Activated CD4-positive, alpha-beta memory T cell treated with anti-CD3 and anti-CD28 coated beads, Interleukin-2, amount 10 ng/mL, durations not matched to agents 7 days and 5 days (primary cell): ENCODE measurements at regions of chr1 and their contacts with region 1.

Region 1: DNA sequence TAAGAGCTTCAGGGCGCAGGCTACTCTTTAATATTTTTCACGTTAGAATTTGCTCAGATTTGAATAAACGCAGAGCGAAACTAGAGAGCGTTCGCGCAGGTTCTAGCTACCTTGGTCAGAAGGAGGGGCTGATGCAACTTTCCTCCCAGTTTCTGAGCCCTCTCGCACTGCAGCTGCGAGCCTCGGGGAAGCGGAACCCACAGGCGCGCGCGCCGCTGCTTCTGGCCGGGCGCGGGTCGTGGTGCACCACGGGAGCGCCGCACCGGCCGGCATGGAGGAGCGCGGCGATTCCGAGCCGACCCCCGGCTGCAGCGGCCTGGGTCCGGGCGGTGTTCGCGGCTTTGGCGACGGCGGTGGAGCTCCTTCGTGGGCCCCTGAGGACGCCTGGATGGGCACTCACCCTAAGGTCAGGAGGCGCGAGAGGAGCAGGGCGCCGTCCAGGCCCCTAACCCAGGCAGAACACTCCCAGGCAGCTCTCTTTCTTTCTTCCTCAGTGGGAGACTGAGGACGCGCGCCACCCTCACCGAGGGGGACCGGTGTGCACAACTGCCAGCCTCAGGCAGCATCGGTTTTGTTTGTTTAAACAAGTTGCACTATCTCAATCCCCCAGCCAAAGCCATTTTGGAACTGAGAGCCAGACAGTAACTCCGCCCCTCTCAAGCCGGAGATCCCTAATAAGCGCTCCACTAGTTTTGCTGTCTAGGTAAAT is at the start of gene TSEN15:
- DNase-seq: peak; percentile 85
- H3K4me3 Mint-ChIP-seq: peak within 1 kb of the TSS; percentile 96
- H3K27ac Mint-ChIP-seq: peak within 1 kb of the TSS; percentile 94
- H3K4me1 Mint-ChIP-seq: peaks cover 31% of the 10 kb centered on the region
- H3K27me3 Mint-ChIP-seq: peaks cover 30% of the 10 kb centered on the region
- total RNA-seq, gene TSEN15: 52.6 to 53.7 TPM

Region 2: DNA sequence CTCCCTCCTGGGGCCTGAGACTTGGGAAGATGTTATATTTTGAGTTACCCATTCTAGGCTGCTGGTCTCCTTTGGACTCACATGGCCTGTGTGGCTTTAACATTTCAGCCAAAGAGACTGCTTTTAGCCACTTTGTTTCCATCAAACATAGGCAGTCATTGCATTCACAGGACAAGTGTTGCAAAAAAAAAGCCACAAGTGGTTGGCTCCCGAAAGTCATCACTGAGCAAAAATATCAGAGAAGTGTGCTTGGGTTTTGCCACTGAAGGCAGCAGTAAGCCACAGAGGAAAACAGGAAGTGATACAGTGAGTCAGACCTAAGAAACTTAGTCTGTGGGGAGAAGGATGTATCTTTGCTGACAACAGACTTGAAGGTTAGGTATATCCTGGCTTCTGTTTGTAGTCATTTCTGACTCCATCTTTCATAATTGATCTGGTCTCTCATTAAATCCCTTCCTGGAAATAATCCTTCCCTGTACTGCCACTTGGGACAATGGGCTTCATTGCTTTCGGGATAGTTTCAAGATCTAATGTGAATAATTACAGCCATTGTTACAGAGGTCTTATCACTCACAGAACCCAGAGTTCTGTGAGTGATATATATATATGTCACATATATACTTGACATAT is 95.0 kb before region 1 on chr1:
- CTCF ChIA-PET with region 1: interaction called, 10 read pairs
- POLR2A ChIA-PET with region 1: interaction called, 39 read pairs
- DNase-seq: peak; percentile 74
- H3K4me3 Mint-ChIP-seq: peak overlapping the region; percentile 8
- H3K27ac Mint-ChIP-seq: no peak overlapping the region
- H3K4me1 Mint-ChIP-seq: peaks cover 9% of the 10 kb centered on the region
- H3K27me3 Mint-ChIP-seq: no peaks in the 10 kb centered on the region

Region 3: DNA sequence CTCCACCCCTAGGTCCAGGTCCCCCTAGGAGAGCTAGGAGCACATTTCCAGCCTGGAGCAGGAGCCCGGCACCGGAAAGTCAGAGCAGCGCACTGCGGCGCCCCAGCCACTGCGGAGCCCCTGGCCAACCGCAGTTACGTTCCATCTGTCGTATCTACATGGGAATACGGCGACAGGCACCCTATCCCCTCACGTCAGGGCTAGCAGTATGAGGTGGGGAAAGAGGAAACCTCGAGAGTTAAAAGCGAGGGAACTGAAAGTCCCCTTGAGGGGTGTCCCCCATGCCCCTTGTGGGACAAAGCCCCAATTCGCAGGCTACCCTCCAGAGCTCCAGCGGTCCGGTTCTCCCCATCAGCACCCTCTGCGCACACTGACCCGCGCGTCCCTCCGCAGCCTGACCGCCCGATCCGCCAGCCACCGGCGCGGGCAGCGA is 15.1 kb before region 1 on chr1:
- CTCF ChIA-PET with region 1: interaction called, 3 read pairs
- POLR2A ChIA-PET with region 1: interaction called, 17 read pairs
- DNase-seq: peak; percentile 20
- H3K4me3 Mint-ChIP-seq: peak overlapping the region; percentile 58
- H3K27ac Mint-ChIP-seq: no peak overlapping the region
- H3K4me1 Mint-ChIP-seq: peaks cover 28% of the 10 kb centered on the region
- H3K27me3 Mint-ChIP-seq: peaks cover 68% of the 10 kb centered on the region

Region 4: GRCh38 chr1:184110272-184111204 is 58.9 kb after region 1 on chr1:
- CTCF ChIA-PET with region 1: no interaction called
- POLR2A ChIA-PET with region 1: no interaction called
- DNase-seq: peak; percentile 21
- H3K4me3 Mint-ChIP-seq: no peak overlapping the region
- H3K27ac Mint-ChIP-seq: no peak overlapping the region
- H3K4me1 Mint-ChIP-seq: peaks cover 9% of the 10 kb centered on the region
- H3K27me3 Mint-ChIP-seq: no peaks in the 10 kb centered on the region